Aorta (tissue), 5 donors: ENCODE measurements at regions of chr3 and their contacts with region 1.

Region 1: DNA sequence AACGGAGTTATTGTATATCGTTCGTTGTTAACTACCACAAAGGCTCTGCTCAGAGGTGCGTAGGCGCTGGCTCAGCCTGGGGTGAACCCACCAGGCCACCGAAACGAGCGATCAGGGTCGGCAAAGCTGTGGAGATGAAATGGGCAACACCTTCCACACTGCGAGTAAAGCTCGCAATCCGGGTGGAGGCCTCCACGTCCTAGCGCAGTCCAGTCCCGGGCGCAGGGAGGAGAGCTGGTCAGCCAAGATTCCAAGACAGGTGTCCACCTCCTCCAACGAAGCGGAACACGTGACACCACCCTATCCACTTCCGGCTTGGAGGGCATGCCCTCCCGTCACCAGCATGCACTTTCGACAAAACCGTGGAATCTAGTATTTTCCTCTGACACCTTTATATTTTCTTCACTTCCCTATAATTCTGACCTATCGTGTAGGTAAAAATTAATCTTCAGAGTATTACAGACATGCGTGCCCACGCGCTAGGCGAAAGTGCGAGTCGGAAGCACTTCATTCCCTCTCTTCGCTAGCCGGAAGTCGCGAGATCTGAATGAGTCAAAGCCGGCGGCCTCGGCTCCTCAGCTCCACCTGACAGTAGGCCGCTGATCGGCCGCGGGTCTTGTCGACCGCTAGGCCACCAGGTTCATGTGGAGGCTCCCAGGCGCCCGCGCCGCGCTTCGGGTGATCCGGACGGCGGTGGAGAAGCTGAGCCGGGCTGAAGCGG is at the start of gene PDE12:
- DNase-seq: peak; percentile 92 to 94
- ATAC-seq: peak; percentile 97
- H3K4me3 ChIP-seq: peak within 1 kb of the TSS; percentile 85
- H3K27ac ChIP-seq: peak within 1 kb of the TSS; percentile 45 to 46
- H3K4me1 ChIP-seq: no peaks in the 10 kb centered on the region
- H3K27me3 ChIP-seq: no peaks in the 10 kb centered on the region
- total RNA-seq, gene PDE12: 14.8 to 15.4 TPM

Region 2: GRCh38 chr3:57592290-57592689 is 36.4 kb after region 1 on chr3:
- intact Hi-C with region 1: loop called (anchors 2 to 5 kb)
- DNase-seq: no peak
- ATAC-seq: no peak
- H3K4me3 ChIP-seq: no peak overlapping the region
- H3K27ac ChIP-seq: no peak overlapping the region
- H3K4me1 ChIP-seq: peaks cover 0 to 6% of the 10 kb centered on the region in 2 donors
- H3K27me3 ChIP-seq: no peaks in the 10 kb centered on the region

Region 3: DNA sequence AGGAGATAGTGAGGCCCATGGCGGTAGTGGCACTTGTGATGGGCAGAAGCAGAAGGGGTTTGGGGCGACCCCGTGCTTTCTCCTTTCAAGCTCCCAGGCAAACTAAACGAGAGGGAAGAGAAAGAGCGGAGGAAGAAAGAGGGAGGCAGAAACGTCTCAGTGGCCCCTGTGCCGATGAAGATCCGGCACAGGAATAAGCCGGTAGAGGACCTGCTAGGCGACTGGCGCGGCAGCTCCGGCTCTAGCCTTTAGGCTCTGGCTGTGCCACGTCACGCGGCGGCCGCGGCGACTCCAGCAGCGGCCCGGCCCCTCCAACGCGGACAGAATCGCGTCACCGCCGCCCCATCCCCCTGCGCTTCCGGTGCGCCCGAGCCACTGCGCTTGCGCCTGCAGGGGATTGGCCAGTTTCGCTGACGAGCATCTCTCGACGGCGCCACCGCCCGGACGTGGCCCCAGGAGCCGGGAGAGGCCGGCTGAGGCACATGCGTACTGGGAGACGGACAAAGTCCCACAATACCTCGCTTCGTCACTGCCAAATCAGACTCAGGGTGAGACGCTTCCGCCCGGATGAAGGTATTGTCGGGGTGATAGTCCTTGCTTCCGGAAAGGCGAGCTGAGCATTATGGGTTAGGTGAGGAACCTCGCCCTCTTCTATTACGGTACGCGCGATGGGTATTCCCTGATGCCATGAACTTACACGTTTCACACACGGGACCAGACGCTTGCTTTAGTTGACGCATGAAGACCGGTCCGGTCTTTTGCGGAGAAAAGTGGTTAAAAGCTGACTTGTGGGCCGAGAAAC is 41.4 kb after region 1 on chr3 and contains the start of gene ARF4:
- intact Hi-C with region 1: loop called (anchors 2 to 5 kb)
- DNase-seq: peak; percentile 100
- ATAC-seq: peak; percentile 99
- H3K4me3 ChIP-seq: peak within 1 kb of the TSS; percentile 87 to 95
- H3K27ac ChIP-seq: peak within 1 kb of the TSS; percentile 85 to 97
- H3K4me1 ChIP-seq: peaks cover 0 to 3% of the 10 kb centered on the region in 2 donors
- H3K27me3 ChIP-seq: no peaks in the 10 kb centered on the region
- total RNA-seq, gene ARF4: 148 TPM

Region 4: GRCh38 chr3:57692259-57693147 is 136.6 kb after region 1 on chr3 and contains the start of gene DENND6A:
- intact Hi-C with region 1: loop called in 1 of 2 experiments (anchors 5 kb)
- DNase-seq: peak; percentile 98 to 99
- ATAC-seq: peak; percentile 97
- H3K4me3 ChIP-seq: peak within 1 kb of the TSS; percentile 63 to 76
- H3K27ac ChIP-seq: peak within 1 kb of the TSS; percentile 84 to 95
- H3K4me1 ChIP-seq: peaks cover 3 to 9% of the 10 kb centered on the region in 2 donors
- H3K27me3 ChIP-seq: no peaks in the 10 kb centered on the region
- total RNA-seq, gene DENND6A: 38.6 to 41.0 TPM